BJ (cell line): ENCODE measurements at regions of chr18 and their contacts with region 1.

Region 1: GRCh38 chr18:55343396-55344073 is 244.5 kb downstream of the TCF4 start:
- DNase-seq: no peak
- H3K4me3 ChIP-seq: no peak overlapping the region
- H3K27me3 ChIP-seq: no peaks in the 10 kb centered on the region
- CTCF ChIP-seq: peak; percentile 67

Region 2: GRCh38 chr18:55384551-55385275 is 41.2 kb after region 1 on chr18:
- CTCF ChIA-PET with region 1: no interaction called
- POLR2A ChIA-PET with region 1: no interaction called
- DNase-seq: no peak
- H3K4me3 ChIP-seq: no peak overlapping the region
- H3K27me3 ChIP-seq: no peaks in the 10 kb centered on the region
- CTCF ChIP-seq: peak; percentile 79

Region 3: GRCh38 chr18:56575819-56576663 is 1232.5 kb after region 1 on chr18:
- CTCF ChIA-PET with region 1: interaction called, 10 read pairs
- POLR2A ChIA-PET with region 1: no interaction called
- DNase-seq: peak; percentile 11
- H3K4me3 ChIP-seq: no peak overlapping the region
- H3K27me3 ChIP-seq: no peaks in the 10 kb centered on the region
- CTCF ChIP-seq: peak; percentile 58